ENCODE measurements at regions of chr9 and their contacts with region 1.

Region 1: DNA sequence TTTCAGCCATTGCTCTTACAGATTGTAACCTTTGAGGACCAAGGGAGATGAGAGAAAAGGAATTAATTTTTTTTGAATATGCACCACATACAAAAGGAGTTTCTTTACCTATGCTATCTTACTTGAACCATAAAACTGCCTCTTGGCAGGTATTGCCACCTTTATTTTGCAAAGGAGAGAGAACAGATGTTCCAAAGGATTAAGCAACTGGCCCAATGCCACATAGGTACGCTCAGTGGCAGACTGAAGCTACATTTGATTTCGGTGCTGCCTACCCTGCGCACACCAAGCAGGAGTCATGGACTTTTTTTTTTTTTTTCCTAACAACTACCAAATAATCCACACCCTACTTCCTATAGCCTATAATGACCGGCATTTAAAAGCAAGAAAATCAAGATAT is 43.1 kb downstream of the SAXO1 start:
- DNase-seq: no peak
- H3K4me3 ChIP-seq: no peak overlapping the region
- H3K27ac ChIP-seq: no peak overlapping the region
- H3K4me1 ChIP-seq: no peaks in the 10 kb centered on the region
- H3K27me3 ChIP-seq: no peaks in the 10 kb centered on the region
- CTCF ChIP-seq: no peak

Region 2: DNA sequence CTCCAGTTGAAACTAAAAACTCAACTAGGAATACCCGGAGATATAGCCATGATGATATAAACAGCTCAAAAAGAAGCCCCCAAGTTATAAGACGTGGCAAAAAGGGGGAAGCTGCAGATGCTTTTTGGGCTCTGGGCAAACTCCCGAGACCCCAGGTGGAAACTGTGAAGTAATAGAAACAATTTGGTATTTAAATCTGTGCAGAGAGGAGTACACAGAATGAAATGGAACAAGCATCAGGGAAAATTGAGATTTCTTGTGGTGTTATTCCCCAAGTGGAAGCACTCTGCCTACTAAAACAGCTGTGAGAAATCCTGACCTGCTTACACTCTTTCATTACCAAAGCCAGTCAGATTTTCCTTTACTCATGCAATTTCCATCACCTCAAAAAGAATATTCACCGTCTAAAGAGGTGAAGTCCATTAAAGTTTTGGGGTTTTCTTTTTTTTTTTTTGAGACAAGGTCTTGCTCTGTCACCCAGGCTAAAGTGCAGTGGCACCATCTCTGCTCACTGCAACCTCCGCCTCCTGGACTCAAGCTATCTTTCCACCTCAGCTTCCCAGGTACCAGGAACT is 19.6 kb after region 1 on chr9:
- CTCF ChIA-PET with region 1: interaction called, 14 read pairs
- dilution Hi-C with region 1: no loop called
- in situ Hi-C with region 1: no loop called
- intact Hi-C with region 1: no loop called
- DNase-seq: no peak
- H3K4me3 ChIP-seq: no peak overlapping the region
- H3K27ac ChIP-seq: no peak overlapping the region
- H3K4me1 ChIP-seq: no peaks in the 10 kb centered on the region
- H3K27me3 ChIP-seq: peaks cover 1% of the 10 kb centered on the region
- CTCF ChIP-seq: no peak

Region 3: GRCh38 chr9:19358701-19359100 is 368.8 kb after region 1 on chr9:
- CTCF ChIA-PET with region 1: no interaction called
- dilution Hi-C with region 1: no loop called
- in situ Hi-C with region 1: no loop called
- intact Hi-C with region 1: no loop called
- DNase-seq: no peak
- H3K4me3 ChIP-seq: no peak overlapping the region
- H3K27ac ChIP-seq: no peak overlapping the region
- H3K4me1 ChIP-seq: no peaks in the 10 kb centered on the region
- H3K27me3 ChIP-seq: no peaks in the 10 kb centered on the region
- CTCF ChIP-seq: no peak